ENCODE measurements at regions of chr11 and their contacts with region 1.

Region 1: GRCh38 chr11:131748151-131749050 is 378.0 kb downstream of the NTM start:
- DNase-seq: no peak

Region 2: DNA sequence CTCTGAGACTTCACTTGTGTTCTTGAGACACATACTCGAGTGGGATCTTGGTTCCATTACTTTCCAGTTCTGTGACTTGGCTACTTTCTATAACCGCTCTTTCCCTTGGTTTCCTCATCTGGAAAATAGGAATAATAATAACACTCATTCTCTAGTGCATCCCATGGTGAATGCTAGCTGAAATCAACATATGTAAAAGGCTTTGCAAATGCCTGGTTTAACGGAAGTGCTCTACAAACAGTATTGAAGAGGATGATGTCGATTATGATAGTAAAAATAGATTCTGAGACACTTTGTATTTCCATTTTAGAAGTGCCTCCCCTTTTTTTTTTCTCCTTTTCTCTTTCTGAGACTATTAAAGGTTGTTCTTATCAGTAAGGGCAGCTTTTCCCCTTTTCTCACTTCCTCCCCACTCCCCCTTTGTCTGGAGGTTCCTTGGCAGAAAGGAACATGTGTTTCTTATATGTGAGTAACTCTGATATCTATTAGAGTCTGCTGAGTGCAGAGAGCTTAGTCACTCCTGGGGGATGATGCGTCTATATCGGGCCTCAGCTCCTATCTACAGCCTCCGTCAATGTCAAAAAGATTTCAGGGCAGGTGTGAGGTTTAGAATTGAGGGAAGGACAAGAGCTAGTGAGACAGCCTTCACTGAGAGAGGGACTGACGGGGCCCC is 111.3 kb after region 1 on chr11:
- intact Hi-C with region 1: loop called (anchors 5 kb)
- DNase-seq: no peak

Region 3: GRCh38 chr11:132028380-132029240 is 280.2 kb after region 1 on chr11:
- intact Hi-C with region 1: no loop called
- DNase-seq: no peak

Measured in cardiac septum (tissue), 1 donor.